Naive thymus-derived CD8-positive, alpha-beta T cell (primary cell): ENCODE measurements at regions of chr6 and their contacts with region 1.

Region 1: DNA sequence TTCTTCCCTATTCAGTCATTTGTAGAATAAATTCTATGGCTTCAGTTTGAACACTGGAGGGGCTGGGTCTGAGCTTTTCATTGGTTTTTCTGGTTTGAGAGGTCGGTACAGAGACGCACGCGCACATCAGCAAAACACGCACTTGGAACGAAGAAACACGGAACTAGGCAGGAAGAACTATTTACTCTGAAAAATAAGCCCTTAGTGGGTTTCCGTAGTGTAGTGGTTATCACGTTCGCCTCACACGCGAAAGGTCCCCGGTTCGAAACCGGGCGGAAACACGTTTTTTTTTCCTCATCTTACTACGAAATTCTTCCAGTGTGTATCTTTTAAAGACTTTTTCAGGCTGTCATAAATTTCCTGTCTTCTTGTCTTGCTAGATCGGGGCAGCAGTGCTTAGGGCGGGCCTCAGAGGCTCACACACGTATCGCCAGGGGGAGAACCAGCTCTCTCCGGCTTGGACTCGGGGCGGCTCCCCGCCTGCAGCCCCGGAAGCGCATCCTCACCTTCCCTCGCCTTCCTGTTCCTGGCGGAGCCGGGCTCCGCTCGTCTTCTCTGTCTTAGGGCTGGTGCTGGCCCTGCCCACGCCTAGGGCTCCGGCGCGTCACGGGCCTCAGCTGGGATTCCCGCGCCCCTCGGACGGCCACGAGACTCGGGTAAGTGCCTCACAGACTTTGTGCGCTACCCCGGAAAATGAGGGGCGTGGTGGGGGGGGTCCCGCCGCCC is at the start of gene HMGN4:
- DNase-seq: peak; percentile 62 to 98 (median 90)
- ATAC-seq: peak; percentile 70 to 74
- H3K4me3 Mint-ChIP-seq: peak within 1 kb of the TSS; percentile 89 to 99 (median 97)
- H3K27ac Mint-ChIP-seq: peak within 1 kb of the TSS; percentile 91 to 100 (median 98)
- H3K4me1 Mint-ChIP-seq: peaks cover 32 to 72% (median 65%) of the 10 kb centered on the region in 4 donors
- H3K27me3 Mint-ChIP-seq: peaks cover 0 to 10% (median 0%) of the 10 kb centered on the region in 5 donors
- polyA plus RNA-seq, gene HMGN4: 110 to 183 (median 151) TPM

Region 2: DNA sequence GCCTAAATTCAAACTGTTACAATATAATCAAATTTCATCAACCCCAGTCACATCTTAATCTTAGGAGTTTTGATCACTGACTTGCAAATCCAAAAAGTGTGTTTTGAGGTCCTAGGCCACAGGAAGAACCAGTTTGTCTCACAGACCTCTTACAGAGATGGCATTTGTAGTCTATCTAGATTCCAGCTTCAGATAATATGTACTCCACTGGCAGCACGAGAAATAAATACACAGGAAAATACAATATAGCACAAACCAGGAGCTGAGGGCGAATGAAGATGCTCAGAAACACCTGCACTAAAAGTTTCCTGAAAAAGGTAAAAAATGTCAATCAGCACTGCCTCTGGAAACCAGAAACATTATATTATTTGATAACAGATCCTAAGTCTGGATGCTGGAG is 98.4 kb before region 1 on chr6:
- POLR2A ChIA-PET with region 1: interaction called, 14 read pairs
- DNase-seq: no peak
- ATAC-seq: no peak
- H3K4me3 Mint-ChIP-seq: peak overlapping the region; percentile 95 to 100 (median 98)
- H3K27ac Mint-ChIP-seq: peak overlapping the region; percentile 97 to 100 (median 99)
- H3K4me1 Mint-ChIP-seq: peaks cover 19 to 49% (median 42%) of the 10 kb centered on the region in 4 donors
- H3K27me3 Mint-ChIP-seq: no peaks in the 10 kb centered on the region

Region 3: GRCh38 chr6:26445934-26446667 is 91.9 kb before region 1 on chr6:
- POLR2A ChIA-PET with region 1: interaction called, 14 read pairs
- DNase-seq: peak in 1 of 10 donors; percentile 13
- ATAC-seq: peak; percentile 43 to 44
- H3K4me3 Mint-ChIP-seq: peak overlapping the region; percentile 52 to 100 (median 82)
- H3K27ac Mint-ChIP-seq: peak overlapping the region; percentile 80 to 99 (median 90)
- H3K4me1 Mint-ChIP-seq: peaks cover 31 to 81% (median 66%) of the 10 kb centered on the region in 4 donors
- H3K27me3 Mint-ChIP-seq: no peaks in the 10 kb centered on the region

Region 4: GRCh38 chr6:26473758-26474438 is 64.1 kb before region 1 on chr6:
- POLR2A ChIA-PET with region 1: interaction called, 55 read pairs
- DNase-seq: peak; percentile 48 to 96 (median 84)
- ATAC-seq: peak; percentile 95
- H3K4me3 Mint-ChIP-seq: peak overlapping the region; percentile 92 to 100 (median 98)
- H3K27ac Mint-ChIP-seq: peak overlapping the region; percentile 96 to 100 (median 99)
- H3K4me1 Mint-ChIP-seq: peaks cover 25 to 76% (median 64%) of the 10 kb centered on the region in 4 donors
- H3K27me3 Mint-ChIP-seq: no peaks in the 10 kb centered on the region

Region 5: GRCh38 chr6:26507658-26508057 is 30.4 kb before region 1 on chr6:
- POLR2A ChIA-PET with region 1: no interaction called
- DNase-seq: no peak
- ATAC-seq: no peak
- H3K4me3 Mint-ChIP-seq: no peak overlapping the region
- H3K27ac Mint-ChIP-seq: no peak overlapping the region
- H3K4me1 Mint-ChIP-seq: no peaks in the 10 kb centered on the region
- H3K27me3 Mint-ChIP-seq: peaks cover 5 to 22% (median 12%) of the 10 kb centered on the region in 5 donors

Region 6: GRCh38 chr6:26520853-26521599 is 17.0 kb before region 1 on chr6:
- POLR2A ChIA-PET with region 1: interaction called, 59 read pairs
- DNase-seq: peak; percentile 76 to 92 (median 86)
- ATAC-seq: peak; percentile 70 to 82
- H3K4me3 Mint-ChIP-seq: peak overlapping the region; percentile 73 to 97 (median 89)
- H3K27ac Mint-ChIP-seq: peak overlapping the region; percentile 67 to 98 (median 91)
- H3K4me1 Mint-ChIP-seq: peaks cover 13 to 41% (median 34%) of the 10 kb centered on the region in 4 donors
- H3K27me3 Mint-ChIP-seq: peaks cover 0 to 3% (median 0%) of the 10 kb centered on the region in 5 donors

Region 7: DNA sequence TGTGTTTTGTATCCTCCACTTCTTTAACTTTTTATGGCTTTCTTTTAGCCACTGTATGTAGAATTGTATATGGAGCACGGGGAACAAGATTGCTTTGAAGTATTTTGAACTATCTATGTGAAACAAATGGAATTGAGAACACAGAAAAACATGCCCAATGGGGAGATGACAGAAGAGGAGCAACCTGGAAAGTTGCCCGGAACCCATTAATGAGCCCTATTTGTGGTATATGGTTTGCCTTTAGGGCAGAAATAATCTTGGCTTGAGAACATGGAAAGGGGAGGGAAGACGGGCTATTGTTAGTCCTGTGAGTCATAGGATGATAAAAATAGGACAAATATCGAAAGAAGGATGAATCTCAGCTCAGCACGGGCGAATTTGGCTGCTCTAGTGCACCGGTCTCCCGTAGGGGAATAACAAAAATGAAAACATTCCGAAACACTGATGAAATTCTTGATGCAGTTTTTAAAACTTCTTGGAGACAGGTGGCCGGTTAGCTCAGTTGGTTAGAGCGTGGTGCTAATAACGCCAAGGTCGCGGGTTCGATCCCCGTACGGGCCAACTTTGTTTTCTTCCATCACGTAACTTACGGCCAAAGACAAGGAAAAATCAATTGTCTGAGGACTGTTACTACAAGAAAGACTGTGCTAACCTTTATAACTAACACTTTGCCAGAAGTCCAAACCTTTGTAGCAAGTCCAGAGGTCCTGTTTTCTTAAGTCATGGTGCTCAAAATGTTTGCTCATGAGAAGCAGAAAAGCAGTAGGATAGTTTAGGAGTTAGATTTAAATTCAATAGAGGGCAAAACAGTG is 15.8 kb after region 1 on chr6:
- POLR2A ChIA-PET with region 1: interaction called, 82 read pairs
- DNase-seq: peak; percentile 49 to 93 (median 77)
- ATAC-seq: peak; percentile 42 to 52
- H3K4me3 Mint-ChIP-seq: no peak overlapping the region
- H3K27ac Mint-ChIP-seq: peak overlapping the region in 1 of 10 donors; percentile 17
- H3K4me1 Mint-ChIP-seq: peaks cover 11 to 26% (median 19%) of the 10 kb centered on the region in 4 donors
- H3K27me3 Mint-ChIP-seq: peaks cover 0 to 2% (median 0%) of the 10 kb centered on the region in 5 donors

Region 8: DNA sequence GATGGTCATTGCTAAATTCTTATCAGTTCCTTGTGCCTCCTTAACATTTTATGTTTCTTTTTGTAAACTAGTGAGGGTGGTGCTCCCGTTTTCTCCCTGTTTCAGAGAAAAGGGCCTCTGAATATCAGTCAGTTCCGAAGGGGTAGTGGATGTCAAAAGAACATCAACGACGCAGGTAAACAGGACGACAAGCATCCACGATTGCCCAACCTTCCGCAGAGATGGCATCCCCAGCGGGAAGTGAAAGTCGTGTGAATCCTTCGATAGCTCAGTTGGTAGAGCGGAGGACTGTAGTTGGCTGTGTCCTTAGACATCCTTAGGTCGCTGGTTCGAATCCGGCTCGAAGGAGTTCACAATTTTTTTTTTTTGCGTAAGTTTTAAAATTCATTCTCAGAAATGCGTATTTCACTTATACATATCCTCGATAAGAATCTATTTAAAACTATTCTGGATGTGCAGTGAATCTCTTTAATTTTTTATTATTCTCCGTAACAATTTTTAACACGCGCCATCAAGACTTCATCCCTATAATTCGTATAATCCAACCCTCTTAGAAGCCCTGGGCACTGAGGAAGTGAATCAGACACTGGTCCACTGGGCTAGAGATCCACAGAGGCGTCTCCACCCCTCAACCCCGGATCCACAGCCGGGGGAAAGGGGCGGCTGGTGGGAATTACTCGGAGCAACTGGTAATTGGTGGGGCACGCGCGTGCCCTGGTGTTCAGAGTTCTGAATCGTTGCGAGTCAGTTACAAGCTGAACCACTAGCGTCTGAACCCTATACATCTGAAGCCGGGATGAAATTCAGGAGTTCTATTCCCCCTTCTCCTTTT is 30.8 kb after region 1 on chr6:
- POLR2A ChIA-PET with region 1: interaction called, 59 read pairs
- DNase-seq: peak; percentile 93 to 99 (median 99)
- ATAC-seq: peak; percentile 80 to 82
- H3K4me3 Mint-ChIP-seq: peak overlapping the region; percentile 91 to 100 (median 95)
- H3K27ac Mint-ChIP-seq: peak overlapping the region; percentile 92 to 100 (median 98)
- H3K4me1 Mint-ChIP-seq: peaks cover 15 to 33% (median 30%) of the 10 kb centered on the region in 4 donors
- H3K27me3 Mint-ChIP-seq: peaks cover 0 to 4% (median 0%) of the 10 kb centered on the region in 5 donors